PC-3 (cell line): ENCODE measurements at regions of chr5 and their contacts with region 1.

Region 1: GRCh38 chr5:76867827-76868693 is 18.2 kb downstream of the S100Z start:
- DNase-seq: peak; percentile 75
- ATAC-seq: peak; percentile 61
- H3K4me3 ChIP-seq: no peak overlapping the region
- H3K27ac ChIP-seq: no peak overlapping the region
- H3K4me1 ChIP-seq: no peaks in the 10 kb centered on the region
- H3K27me3 ChIP-seq: no peaks in the 10 kb centered on the region
- CTCF ChIP-seq: peak; percentile 72

Region 2: DNA sequence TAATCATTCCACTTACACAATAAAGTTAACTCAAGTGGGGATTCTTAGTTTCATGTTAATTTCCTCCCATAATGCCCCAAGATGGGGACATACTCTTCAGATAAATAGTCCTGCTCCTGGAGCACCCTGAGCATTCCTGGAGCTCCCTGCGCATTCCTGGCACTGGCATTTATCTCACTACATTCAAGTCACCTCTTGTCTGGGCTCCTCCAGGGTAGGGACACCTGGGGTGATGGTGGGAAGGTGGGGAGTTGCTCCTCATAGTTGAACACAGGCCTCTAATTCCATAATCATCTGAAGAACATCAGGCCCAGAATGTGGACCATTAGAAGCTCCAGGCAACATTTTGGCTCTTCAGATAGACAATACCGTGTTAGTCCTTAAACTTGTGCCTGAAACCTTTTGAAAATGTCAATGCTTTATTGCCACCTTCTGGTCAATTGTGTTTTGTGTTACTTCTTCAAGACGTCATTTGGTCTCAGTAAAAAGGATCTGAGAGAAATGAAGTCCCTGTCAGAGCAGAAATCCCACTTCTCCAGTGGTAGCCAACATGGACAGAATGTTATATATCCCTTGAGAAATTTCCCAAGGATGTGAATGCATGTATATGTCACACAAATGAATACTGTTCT is 148.0 kb after region 1 on chr5:
- CTCF ChIA-PET with region 1: interaction called, 6 read pairs
- POLR2A ChIA-PET with region 1: no interaction called
- intact Hi-C with region 1: loop called (anchors 1 kb)
- DNase-seq: peak; percentile 62
- ATAC-seq: peak; percentile 52
- H3K4me3 ChIP-seq: no peak overlapping the region
- H3K27ac ChIP-seq: no peak overlapping the region
- H3K4me1 ChIP-seq: peaks cover 4% of the 10 kb centered on the region; the same call in 1 of the 2 replicates
- H3K27me3 ChIP-seq: no peaks in the 10 kb centered on the region
- CTCF ChIP-seq: peak; percentile 64

Region 3: GRCh38 chr5:77239126-77239741 is 371.2 kb after region 1 on chr5:
- CTCF ChIA-PET with region 1: no interaction called
- POLR2A ChIA-PET with region 1: no interaction called
- intact Hi-C with region 1: loop called (anchors 10 kb)
- DNase-seq: peak; percentile 50
- ATAC-seq: peak; percentile 40; the same call in 1 of the 2 replicates
- H3K4me3 ChIP-seq: no peak overlapping the region
- H3K27ac ChIP-seq: no peak overlapping the region
- H3K4me1 ChIP-seq: no peaks in the 10 kb centered on the region
- H3K27me3 ChIP-seq: peaks cover 4% of the 10 kb centered on the region; the same call in 1 of the 2 replicates
- CTCF ChIP-seq: peak; percentile 66

Region 4: GRCh38 chr5:77437194-77437593 is 569.1 kb after region 1 on chr5:
- CTCF ChIA-PET with region 1: no interaction called
- POLR2A ChIA-PET with region 1: no interaction called
- intact Hi-C with region 1: loop called (anchors 10 kb)
- DNase-seq: peak; percentile 12
- ATAC-seq: peak; percentile 43; the same call in 1 of the 2 replicates
- H3K4me3 ChIP-seq: no peak overlapping the region
- H3K27ac ChIP-seq: no peak overlapping the region
- H3K4me1 ChIP-seq: peaks cover 2% of the 10 kb centered on the region
- H3K27me3 ChIP-seq: no peaks in the 10 kb centered on the region
- CTCF ChIP-seq: peak; percentile 53